ENCODE measurements at regions of chr5 and their contacts with region 1.

Region 1: DNA sequence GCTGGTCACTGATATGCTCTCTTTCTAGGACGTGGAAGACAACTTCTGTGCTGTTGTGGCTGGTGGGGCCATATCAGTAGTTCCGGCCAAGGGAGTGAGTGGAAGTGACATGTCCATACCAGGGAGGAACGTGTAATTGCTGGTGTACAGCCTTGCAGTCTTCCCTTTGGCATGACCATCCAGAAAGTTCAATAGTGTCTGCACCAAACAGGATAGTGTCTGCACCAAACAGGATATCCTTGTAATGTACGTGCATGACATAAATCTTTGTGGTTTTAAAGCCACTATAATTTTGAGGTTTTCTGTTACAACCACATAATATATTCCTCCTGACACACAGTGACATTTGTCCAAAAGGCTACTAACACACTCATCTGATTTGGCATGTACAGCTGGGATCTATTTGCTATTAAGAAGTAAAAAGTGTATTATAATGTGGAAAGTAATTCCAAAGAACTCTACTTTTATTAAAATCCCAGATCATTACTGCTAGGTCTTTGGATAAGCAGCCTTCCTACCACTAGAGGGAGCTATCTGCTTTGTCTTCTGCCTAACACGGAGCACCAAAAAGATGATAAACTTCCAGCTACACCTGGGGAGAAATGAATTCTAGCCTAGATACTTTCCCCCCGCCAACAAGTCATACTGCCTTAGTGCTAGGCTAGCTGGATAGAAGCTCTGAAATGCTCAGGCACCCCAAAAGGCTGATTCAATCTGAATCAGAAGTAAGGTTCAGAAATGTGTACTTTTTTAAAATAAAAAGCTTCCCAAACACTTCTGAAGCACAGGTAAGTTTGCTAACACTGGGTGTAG is 52.7 kb downstream of the RNF145 start:
- DNase-seq: no peak
- H3K4me3 ChIP-seq: no peak overlapping the region
- H3K27me3 ChIP-seq: no peaks in the 10 kb centered on the region
- CTCF ChIP-seq: peak; percentile 82

Region 2: GRCh38 chr5:158676642-158677469 is 479.8 kb before region 1 on chr5:
- CTCF ChIA-PET with region 1: no interaction called
- POLR2A ChIA-PET with region 1: no interaction called
- DNase-seq: no peak
- H3K4me3 ChIP-seq: no peak overlapping the region
- H3K27me3 ChIP-seq: no peaks in the 10 kb centered on the region; the same call in 1 of the 2 replicates
- CTCF ChIP-seq: no peak

Region 3: DNA sequence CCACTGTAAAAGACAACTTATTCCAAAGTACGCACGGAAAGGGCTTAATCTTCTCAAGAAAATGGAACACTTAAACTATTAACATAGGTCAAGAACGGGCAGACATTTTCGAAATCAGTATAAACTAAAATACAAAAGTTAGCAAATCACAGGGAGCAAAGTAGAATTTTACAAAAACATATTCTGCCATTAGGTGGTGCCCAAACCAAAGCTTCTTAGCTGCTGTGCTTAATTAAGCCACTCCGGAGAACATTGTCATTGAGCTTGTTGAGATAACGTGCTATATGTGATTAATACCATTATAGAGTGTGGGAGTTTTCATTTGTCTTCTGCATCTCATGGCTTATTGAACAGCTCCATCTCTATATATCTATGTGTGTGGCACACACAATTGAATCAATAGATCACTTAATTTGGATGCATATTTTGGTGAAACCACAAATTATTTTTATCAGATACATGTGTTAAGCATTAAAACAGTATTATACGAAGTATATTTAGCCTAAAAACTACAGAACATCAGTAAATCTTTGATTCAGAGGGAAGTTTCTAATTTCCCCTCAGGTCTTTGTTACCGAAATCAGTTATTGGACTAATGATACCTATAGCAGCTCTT is 129.9 kb after region 1 on chr5:
- CTCF ChIA-PET with region 1: interaction called, 24 read pairs
- POLR2A ChIA-PET with region 1: no interaction called
- DNase-seq: no peak
- H3K4me3 ChIP-seq: no peak overlapping the region
- H3K27me3 ChIP-seq: no peaks in the 10 kb centered on the region
- CTCF ChIP-seq: peak; percentile 55

Region 4: DNA sequence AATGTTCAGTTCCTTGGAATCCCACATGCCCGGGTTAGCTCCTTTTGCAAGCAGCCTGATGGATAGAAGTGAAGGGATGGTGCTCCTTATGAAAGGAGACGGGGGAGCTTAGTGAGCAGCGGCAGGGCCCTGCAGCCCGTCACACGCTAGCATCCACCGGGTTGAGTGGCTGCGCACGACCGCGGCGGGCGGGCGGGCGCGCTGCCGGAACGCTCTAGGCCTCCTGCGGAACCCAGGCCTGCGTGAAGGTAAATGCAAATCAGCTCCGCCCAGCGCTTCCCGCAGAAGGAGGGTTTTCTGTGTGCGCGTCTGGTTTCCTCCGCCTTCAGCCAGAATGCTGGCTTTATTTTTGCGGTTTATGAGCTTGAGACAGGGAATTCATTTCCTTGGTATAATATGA is 153.9 kb after region 1 on chr5:
- CTCF ChIA-PET with region 1: interaction called, 55 read pairs
- POLR2A ChIA-PET with region 1: no interaction called
- DNase-seq: no peak
- H3K4me3 ChIP-seq: no peak overlapping the region
- H3K27me3 ChIP-seq: peaks cover 18% of the 10 kb centered on the region
- CTCF ChIP-seq: no peak

Measured in BJ (cell line).